ENCODE measurements at regions of chr2 and their contacts with region 1.

Region 1: DNA sequence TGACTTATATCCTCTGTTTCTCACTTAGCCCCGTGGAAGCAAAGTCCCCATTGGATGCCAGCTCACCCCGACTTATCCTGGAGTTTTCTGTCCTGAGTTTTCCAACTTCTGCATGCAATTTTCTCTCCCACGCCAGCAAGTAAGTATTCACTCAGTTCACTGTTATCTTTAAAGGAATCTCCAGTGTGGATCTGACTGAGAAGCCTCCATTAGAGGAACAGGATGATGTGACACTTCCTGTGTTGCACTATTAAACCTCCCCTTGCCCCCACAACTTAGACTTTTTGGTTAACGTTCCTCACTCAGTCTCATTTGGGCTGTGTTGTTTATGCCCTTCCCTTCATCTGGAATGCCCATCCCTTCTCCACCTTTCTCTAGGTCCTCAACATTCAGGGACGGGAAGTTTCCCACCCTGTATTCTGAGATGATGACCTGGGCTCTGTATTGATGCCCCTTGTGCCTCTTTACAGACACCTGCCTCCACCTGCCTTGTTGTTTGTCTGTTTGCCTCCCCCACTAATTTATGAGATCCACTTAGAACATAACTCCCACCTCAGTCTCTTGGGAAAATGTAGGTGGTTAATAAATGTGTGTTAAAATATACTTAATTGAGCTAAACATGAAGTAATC is 536.1 kb upstream of the RAB6C start:
- DNase-seq: no peak
- H3K4me3 ChIP-seq: no peak overlapping the region
- H3K27ac ChIP-seq: no peak overlapping the region
- H3K4me1 ChIP-seq: no peaks in the 10 kb centered on the region
- H3K27me3 ChIP-seq: peaks cover 10% of the 10 kb centered on the region
- CTCF ChIP-seq: no peak

Region 2: GRCh38 chr2:129456691-129457090 is 13.3 kb after region 1 on chr2:
- CTCF ChIA-PET with region 1: no interaction called
- POLR2A ChIA-PET with region 1: no interaction called
- intact Hi-C with region 1: loop called (anchors 1 kb)
- DNase-seq: no peak
- H3K4me3 ChIP-seq: no peak overlapping the region
- H3K27ac ChIP-seq: no peak overlapping the region
- H3K4me1 ChIP-seq: no peaks in the 10 kb centered on the region
- H3K27me3 ChIP-seq: peaks cover 9% of the 10 kb centered on the region
- CTCF ChIP-seq: no peak

Measured in A673 (cell line).